ENCODE measurements at regions of chr2 and their contacts with region 1.

Region 1: GRCh38 chr2:47386551-47386950 is 16.4 kb upstream of the MSH2 start:
- DNase-seq: no peak
- H3K4me3 ChIP-seq: no peak overlapping the region
- H3K27ac ChIP-seq: no peak overlapping the region
- H3K4me1 ChIP-seq: no peaks in the 10 kb centered on the region
- H3K27me3 ChIP-seq: peaks cover 2 to 9% of the 10 kb centered on the region in 2 experiments
- CTCF ChIP-seq: no peak
- POLR2A ChIP-seq: no peak

Region 2: DNA sequence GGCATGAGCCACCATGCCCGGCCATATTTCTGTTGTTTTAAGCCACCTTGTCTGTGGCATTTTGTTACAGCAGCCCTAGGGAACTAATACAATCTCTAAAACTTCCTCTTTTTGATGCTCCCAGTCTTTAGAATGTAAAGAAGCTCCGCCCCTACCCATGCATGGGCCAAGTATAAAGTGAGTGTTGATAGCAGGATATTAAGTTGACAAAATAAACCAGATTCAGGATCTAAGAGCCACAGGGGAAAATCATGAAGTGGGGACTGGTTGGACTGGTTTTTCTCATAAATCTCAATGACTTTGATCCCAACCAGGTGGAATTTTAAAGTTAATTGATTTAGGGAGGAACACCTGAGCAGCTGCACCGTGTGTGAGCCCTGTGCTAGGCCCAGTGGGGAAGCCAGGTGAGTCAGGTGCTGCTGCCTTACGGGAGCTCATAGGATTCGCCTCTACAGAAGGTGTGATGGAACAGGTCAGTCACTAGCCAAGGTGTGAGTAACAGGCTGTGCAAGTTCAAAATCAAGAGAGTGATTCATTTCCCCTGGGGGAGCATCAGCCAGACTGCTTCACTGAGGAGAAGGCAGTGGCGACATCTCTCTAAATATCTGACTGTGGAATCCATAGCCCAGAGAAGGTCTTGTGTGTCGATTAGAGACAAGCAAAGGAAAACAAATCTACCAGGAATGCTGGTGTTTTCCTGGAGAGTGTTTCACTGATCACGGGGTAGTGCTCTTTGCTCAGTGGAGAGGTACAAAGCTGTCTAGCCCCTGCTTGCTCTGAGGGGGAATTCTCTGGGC is 46.6 kb before region 1 on chr2:
- CTCF ChIA-PET with region 1: interaction called, 617 read pairs
- POLR2A ChIA-PET with region 1: interaction called, 14 read pairs
- dilution Hi-C with region 1: no loop called
- intact Hi-C with region 1: loop called (anchors 1 kb)
- DNase-seq: no peak
- H3K4me3 ChIP-seq: no peak overlapping the region
- H3K27ac ChIP-seq: no peak overlapping the region
- H3K4me1 ChIP-seq: peaks cover 5% of the 10 kb centered on the region
- H3K27me3 ChIP-seq: no peaks in the 10 kb centered on the region
- CTCF ChIP-seq: no peak
- POLR2A ChIP-seq: no peak

Region 3: DNA sequence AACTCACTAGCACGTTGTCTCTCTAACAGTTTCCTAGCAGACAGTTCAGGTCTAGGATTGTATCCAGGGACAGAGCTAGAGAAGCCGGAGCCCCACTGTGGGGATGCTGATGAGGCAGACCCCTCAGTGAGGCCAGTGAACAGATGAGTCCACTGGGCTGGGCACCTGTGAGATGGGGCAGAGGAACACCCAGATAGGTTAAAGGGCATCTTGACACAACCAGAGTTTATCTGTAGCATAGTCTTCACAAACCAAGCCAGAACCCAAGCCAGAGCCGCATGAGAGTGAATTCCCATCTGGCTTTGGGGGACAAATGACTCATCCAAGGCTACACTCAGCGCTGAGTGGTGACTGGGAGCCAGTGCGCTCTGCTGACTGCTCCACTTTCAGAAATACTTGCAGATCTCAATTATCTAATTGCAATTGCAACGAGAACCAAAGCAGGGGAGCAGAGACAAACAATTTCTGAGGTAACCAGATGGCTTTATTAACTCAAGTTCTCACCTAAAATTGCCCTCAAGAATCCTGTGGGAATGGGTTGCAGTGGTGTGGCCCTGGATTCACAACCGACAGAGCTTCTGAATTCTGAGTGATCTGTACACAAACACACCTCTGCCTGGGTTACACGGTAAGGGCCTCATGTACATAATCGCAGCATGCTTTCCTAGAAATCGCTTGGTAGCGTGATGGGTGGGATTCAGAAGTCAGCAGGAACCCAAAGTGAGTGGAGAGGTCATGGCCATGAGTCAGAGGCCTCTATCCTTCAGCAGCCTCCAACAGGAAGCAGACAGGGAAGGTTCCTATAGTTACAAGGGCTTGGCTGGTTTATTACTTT is 32.3 kb before region 1 on chr2:
- CTCF ChIA-PET with region 1: interaction called, 20 read pairs
- POLR2A ChIA-PET with region 1: interaction called, 3 read pairs
- dilution Hi-C with region 1: no loop called
- intact Hi-C with region 1: no loop called
- DNase-seq: peak; percentile 74
- H3K4me3 ChIP-seq: no peak overlapping the region
- H3K27ac ChIP-seq: peak overlapping the region; percentile 79
- H3K4me1 ChIP-seq: peaks cover 16% of the 10 kb centered on the region
- H3K27me3 ChIP-seq: no peaks in the 10 kb centered on the region
- CTCF ChIP-seq: no peak
- POLR2A ChIP-seq: no peak

Region 4: DNA sequence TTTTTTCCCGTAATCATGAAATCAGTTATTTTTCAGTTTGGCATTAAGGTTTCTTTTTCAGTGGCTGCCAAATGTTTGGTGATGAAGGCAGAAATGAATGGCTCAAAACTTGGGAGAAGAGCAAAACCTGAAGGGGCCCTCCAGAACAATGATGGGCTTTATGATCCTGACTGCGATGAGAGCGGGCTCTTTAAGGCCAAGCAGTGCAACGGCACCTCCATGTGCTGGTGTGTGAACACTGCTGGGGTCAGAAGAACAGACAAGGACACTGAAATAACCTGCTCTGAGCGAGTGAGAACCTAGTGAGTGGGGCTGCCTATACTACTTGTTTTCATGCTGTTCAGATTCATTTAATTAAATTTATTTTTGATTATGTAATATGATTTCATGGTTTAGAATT is 12.8 kb before region 1 on chr2:
- CTCF ChIA-PET with region 1: interaction called, 23 read pairs
- POLR2A ChIA-PET with region 1: no interaction called
- dilution Hi-C with region 1: no loop called
- intact Hi-C with region 1: no loop called
- DNase-seq: no peak
- H3K4me3 ChIP-seq: no peak overlapping the region
- H3K27ac ChIP-seq: no peak overlapping the region
- H3K4me1 ChIP-seq: peaks cover 9% of the 10 kb centered on the region
- H3K27me3 ChIP-seq: peaks cover 5 to 8% of the 10 kb centered on the region in 2 experiments
- CTCF ChIP-seq: no peak
- POLR2A ChIP-seq: no peak

Measured in endothelial cell of umbilical vein (primary cell).